Mammary epithelial cell (primary cell): ENCODE measurements at regions of chr2 and their contacts with region 1.

Region 1: GRCh38 chr2:195656859-195657633 is at the start of gene SLC39A10:
- DNase-seq: peak; percentile 97
- H3K4me3 ChIP-seq: peak within 1 kb of the TSS; percentile 83 to 93 (median 88)
- H3K27ac ChIP-seq: peak within 1 kb of the TSS; percentile 98
- H3K4me1 ChIP-seq: peaks cover 11% of the 10 kb centered on the region
- H3K27me3 ChIP-seq: no peaks in the 10 kb centered on the region
- CTCF ChIP-seq: no peak
- total RNA-seq, gene SLC39A10: 54.5 to 60.7 TPM

Region 2: DNA sequence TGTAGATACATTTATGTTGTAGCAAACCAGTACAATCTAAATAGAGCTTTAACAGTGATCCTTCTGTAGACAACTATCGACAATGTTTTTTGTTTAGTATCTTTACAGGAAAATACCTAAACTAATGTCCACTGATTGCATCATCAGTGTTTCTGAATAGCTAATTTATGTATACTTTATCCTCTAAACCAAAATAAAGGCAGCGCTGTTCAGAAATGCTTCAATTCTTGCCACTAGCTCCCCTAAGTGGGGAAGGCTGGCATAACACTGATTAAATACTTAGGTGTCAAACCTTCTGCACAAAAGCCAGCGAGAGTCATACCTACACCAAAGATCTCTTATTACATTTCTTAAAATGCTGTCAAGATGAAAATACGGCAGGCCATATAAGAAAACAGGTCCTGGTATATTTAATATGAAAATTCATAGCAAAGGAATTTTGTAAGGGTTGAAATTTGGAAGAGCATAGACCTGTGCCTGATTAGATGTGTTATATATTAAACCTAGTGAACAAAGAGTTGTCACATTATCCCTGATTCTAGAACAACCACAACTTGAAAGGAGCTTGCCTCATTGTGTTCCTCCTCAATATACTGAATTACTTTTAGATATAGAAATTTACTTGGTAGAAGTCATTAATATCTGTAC is 1693.5 kb before region 1 on chr2:
- CTCF ChIA-PET with region 1: no interaction called
- dilution Hi-C with region 1: no loop called
- in situ Hi-C with region 1: no loop called
- intact Hi-C with region 1: loop called (anchors 5 kb)
- DNase-seq: peak; percentile 37
- H3K4me3 ChIP-seq: no peak overlapping the region
- H3K27ac ChIP-seq: no peak overlapping the region
- H3K4me1 ChIP-seq: no peaks in the 10 kb centered on the region
- H3K27me3 ChIP-seq: no peaks in the 10 kb centered on the region
- CTCF ChIP-seq: peak; percentile 56 to 65

Region 3: DNA sequence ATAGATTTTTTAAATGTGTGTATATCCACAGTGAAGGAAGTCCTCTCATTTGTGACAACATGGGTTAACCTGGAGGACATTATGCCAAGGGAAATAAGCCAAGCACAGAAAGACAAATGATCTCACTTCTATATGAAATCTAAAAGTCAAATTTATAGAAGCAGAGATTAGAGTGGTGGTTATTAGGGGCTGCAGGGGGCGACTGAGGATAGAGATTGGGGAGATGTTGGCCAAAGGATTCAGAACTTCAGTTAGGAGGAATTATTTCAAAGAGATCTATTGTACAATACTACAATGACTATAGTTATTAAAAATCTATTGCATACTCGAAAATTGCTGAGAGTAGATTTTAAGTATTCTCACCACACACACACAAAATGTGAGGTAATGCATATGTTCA is 252.4 kb before region 1 on chr2:
- CTCF ChIA-PET with region 1: no interaction called
- dilution Hi-C with region 1: no loop called
- in situ Hi-C with region 1: no loop called
- intact Hi-C with region 1: loop called (anchors 2 kb)
- DNase-seq: no peak
- H3K4me3 ChIP-seq: no peak overlapping the region
- H3K27ac ChIP-seq: no peak overlapping the region
- H3K4me1 ChIP-seq: peaks cover 9% of the 10 kb centered on the region
- H3K27me3 ChIP-seq: no peaks in the 10 kb centered on the region
- CTCF ChIP-seq: no peak

Region 4: DNA sequence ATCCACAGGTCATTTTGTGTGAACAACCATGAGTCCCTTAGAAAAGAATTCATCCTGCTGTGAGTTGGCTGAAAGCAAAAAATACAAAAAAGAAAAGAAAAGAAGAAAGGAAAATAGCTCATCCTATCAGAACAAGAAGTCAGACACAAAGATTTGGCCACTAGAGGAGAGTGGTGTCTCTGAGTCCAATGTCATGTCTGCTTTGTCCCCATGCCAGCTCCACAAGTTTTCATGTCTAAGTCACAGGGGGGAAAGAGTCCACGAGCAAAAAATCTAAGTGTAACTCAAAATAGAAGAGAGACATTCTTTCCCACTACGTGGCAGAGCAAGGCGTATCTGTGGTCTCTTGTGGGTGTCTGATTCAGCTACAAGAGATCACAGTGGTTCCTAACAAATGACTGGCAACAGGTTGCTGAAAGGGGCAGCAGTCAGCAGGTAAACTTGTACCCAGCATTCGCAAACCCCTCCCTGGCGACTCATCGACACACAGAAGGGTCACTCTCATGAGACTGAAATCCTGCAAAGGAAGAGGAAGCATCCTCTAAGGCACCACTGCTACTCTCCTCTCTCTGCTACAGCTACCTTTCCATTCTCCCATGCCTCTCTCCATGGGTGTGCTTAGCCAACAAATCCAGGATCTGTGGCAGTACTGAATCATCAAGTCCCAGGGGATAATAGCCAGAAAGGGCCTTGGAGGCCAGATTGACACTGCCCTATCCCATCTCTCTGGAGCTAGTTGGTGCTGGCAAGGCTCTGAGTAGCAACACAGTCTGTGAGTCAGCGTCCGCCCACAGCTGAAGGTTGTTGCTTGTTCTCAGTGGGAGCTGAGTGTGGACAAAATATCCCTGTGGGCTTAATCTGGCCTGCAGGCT is 123.0 kb before region 1 on chr2:
- CTCF ChIA-PET with region 1: no interaction called
- dilution Hi-C with region 1: no loop called
- in situ Hi-C with region 1: no loop called
- intact Hi-C with region 1: loop called (anchors 1 kb)
- DNase-seq: peak; percentile 84
- H3K4me3 ChIP-seq: no peak overlapping the region
- H3K27ac ChIP-seq: peak overlapping the region; percentile 56
- H3K4me1 ChIP-seq: peaks cover 19% of the 10 kb centered on the region
- H3K27me3 ChIP-seq: no peaks in the 10 kb centered on the region
- CTCF ChIP-seq: peak in 1 of 2 donors; percentile 25

Region 5: DNA sequence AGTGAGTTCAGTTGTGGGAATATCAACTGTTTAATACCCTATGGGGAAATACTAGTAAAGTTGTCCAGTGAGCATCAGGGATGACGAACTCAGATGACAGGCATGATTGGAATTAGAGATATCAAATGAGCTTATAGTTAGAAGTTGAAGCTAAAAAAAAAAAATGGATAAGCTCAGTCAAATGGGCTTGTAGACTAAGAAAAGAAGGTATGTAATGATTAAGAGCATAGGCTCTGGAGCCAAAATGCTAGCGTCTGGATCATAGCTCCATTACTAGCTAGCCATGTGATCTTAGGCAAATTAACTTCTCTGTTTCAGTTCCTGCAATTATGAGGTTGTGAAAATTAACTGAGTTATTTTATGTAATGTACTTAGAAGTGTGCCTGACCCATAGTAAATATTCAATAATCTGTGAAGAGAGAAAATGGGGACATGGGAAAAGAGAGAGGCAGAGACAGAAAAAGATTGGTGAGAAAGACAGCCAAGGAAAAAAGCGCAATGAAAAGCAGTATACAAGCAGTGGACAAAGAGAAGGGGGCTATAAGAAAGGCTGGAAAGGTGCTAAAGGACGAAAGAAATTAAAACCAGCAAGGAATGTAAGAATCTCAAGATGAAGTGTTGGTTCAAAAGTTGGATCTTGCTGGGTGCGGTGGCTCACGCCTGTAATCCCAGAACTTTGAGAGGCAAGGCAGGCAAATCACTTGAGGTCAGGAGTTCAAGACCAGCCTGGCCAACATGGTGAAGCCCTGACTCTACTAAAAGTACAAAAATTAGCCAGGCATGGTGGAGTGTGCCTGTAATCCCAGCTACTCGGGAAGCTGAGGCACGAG is 95.6 kb before region 1 on chr2:
- CTCF ChIA-PET with region 1: interaction called, 8 read pairs
- dilution Hi-C with region 1: no loop called
- in situ Hi-C with region 1: no loop called
- intact Hi-C with region 1: loop called (anchors 1 kb)
- DNase-seq: peak; percentile 92
- H3K4me3 ChIP-seq: no peak overlapping the region
- H3K27ac ChIP-seq: peak overlapping the region; percentile 65
- H3K4me1 ChIP-seq: peaks cover 34% of the 10 kb centered on the region
- H3K27me3 ChIP-seq: no peaks in the 10 kb centered on the region
- CTCF ChIP-seq: no peak

Region 6: DNA sequence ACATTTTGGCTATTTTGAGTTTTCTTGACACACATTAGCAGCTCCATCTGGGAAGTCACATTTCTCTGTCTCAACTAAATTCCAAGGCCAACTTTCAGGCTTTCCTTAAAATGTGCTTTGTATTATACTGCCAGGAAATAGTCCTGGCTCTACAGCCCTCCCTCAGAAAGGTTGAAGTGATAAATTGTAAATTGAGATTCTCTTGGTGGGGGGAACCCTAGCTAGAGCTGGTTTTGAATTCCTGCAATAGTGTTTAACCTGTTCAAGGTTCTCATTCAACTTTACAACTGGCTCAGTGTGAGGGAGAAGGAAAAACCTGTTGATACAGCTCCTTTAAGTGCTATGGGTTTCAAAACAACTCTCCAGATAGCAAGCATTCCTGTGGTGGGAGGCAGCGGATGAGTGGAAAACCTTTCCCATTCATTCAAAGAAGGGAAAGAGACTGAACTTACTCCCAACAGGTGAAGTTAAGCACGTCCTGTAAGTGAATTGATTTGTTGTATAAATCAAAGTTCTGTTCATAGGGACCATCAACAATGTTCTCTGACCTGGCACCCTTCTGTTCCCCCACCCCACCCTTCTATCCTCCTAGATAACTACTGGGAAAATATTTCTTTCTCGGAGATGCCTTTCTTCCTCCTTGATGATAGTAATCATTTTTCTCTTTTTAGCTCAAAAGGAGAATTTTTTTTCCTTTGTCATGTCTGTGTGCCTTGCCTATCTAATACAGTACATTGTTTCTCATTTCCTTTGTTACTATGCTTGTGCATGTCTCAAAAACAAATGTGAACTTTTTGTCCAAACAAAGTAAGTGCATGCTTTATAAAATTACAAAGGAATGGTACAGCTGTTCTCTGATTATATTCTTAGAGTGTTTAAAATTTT is 44.2 kb before region 1 on chr2:
- CTCF ChIA-PET with region 1: interaction called, 4 read pairs
- dilution Hi-C with region 1: no loop called
- in situ Hi-C with region 1: no loop called
- intact Hi-C with region 1: loop called (anchors 2 kb)
- DNase-seq: peak; percentile 78
- H3K4me3 ChIP-seq: peak overlapping the region in 2 of 3 experiments; percentile 53 to 71
- H3K27ac ChIP-seq: peak overlapping the region; percentile 88
- H3K4me1 ChIP-seq: peaks cover 19% of the 10 kb centered on the region
- H3K27me3 ChIP-seq: no peaks in the 10 kb centered on the region
- CTCF ChIP-seq: no peak

Region 7: GRCh38 chr2:195930082-195930481 is 273.0 kb after region 1 on chr2:
- CTCF ChIA-PET with region 1: no interaction called
- dilution Hi-C with region 1: loop called (anchors 10 kb)
- in situ Hi-C with region 1: loop called in 1 of 2 experiments (anchors 10 kb)
- intact Hi-C with region 1: no loop called
- DNase-seq: no peak
- H3K4me3 ChIP-seq: no peak overlapping the region
- H3K27ac ChIP-seq: no peak overlapping the region
- H3K4me1 ChIP-seq: no peaks in the 10 kb centered on the region
- H3K27me3 ChIP-seq: no peaks in the 10 kb centered on the region
- CTCF ChIP-seq: no peak